ENCODE measurements at regions of chr5 and their contacts with region 1.

Region 1: DNA sequence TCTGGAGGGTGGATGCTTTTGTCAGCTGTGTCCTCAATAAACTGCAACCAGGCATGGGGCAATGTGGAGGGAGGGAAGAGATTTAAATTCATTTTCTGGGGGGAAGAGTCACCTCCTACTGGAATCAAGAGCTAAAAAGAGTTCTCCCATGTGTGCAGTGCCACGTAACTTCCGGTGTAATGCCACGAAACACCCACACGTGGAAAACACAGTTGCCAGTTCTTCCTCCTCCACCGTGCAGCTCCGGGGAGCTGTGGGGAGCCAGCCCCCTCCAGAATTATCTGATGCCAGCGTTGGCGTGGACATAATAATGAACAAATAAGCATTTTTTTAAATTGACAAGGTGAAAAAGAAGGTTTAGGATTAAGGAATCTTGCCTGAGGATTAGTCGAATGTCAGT is 32.1 kb upstream of the MED10 start:
- DNase-seq: no peak
- ATAC-seq: no peak
- H3K4me3 ChIP-seq: no peak overlapping the region
- H3K4me3 Mint-ChIP-seq: no peak overlapping the region
- H3K27ac ChIP-seq: no peak overlapping the region
- H3K27ac Mint-ChIP-seq: no peak overlapping the region
- H3K4me1 ChIP-seq: no peaks in the 10 kb centered on the region
- H3K4me1 Mint-ChIP-seq: no peaks in the 10 kb centered on the region
- H3K27me3 ChIP-seq: no peaks in the 10 kb centered on the region
- H3K27me3 Mint-ChIP-seq: peaks cover 18% of the 10 kb centered on the region
- CTCF ChIP-seq: no peak

Region 2: GRCh38 chr5:5335773-5336211 is 1074.6 kb before region 1 on chr5:
- CTCF ChIA-PET with region 1: no interaction called
- POLR2A ChIA-PET with region 1: no interaction called
- intact Hi-C with region 1: no loop called
- DNase-seq: no peak
- ATAC-seq: no peak
- H3K4me3 ChIP-seq: no peak overlapping the region
- H3K4me3 Mint-ChIP-seq: no peak overlapping the region
- H3K27ac ChIP-seq: no peak overlapping the region
- H3K27ac Mint-ChIP-seq: no peak overlapping the region
- H3K4me1 ChIP-seq: no peaks in the 10 kb centered on the region
- H3K4me1 Mint-ChIP-seq: no peaks in the 10 kb centered on the region
- H3K27me3 ChIP-seq: no peaks in the 10 kb centered on the region
- H3K27me3 Mint-ChIP-seq: no peaks in the 10 kb centered on the region
- CTCF ChIP-seq: no peak

Region 3: DNA sequence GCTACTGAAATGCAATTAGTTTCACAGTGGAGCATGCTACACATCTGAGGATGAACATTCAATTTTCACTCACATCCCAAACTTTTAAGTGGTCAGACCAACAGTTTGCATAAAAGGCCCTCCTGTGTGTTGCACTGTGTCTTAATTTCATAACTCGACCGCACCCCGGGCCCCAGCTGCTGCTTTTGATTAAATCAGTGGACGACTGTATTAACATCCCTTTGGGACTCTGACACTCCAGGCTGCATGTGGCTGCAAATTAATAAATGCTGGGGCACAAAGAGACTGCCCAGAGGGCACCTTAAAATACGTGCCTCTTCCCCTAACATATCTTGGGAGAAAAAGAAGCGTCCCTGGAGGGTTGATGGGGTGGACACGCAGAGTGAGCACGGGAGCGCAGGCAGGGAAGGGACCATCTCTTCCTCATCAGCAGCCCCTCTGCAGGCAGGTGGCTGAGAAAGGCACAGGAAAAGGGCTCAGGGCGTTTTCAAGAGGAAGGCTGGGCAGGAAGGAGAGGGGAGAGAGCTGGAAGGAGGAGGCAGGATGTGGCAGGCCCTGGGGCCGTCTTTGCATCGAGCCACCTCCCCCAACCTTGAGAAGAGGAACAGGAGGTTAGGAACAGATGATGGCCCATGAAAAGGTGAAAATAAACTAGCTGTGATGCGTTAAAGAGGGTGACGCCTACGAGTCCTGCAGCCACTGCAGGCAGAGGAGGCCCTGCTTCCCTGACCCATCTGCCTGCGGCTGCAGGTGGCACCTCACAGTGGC is 50.7 kb before region 1 on chr5:
- CTCF ChIA-PET with region 1: no interaction called
- POLR2A ChIA-PET with region 1: no interaction called
- intact Hi-C with region 1: loop called in 1 of 2 experiments (anchors 5 kb)
- DNase-seq: peak in 3 of 9 experiments; percentile 27 to 62 (median 35)
- ATAC-seq: peak; percentile 77
- H3K4me3 ChIP-seq: peak overlapping the region in 1 of 2 experiments; percentile 3
- H3K4me3 Mint-ChIP-seq: peak overlapping the region; percentile 59
- H3K27ac ChIP-seq: peak overlapping the region; percentile 13 to 46
- H3K27ac Mint-ChIP-seq: peak overlapping the region; percentile 89
- H3K4me1 ChIP-seq: peaks cover 20% of the 10 kb centered on the region
- H3K4me1 Mint-ChIP-seq: peaks cover 17% of the 10 kb centered on the region
- H3K27me3 ChIP-seq: no peaks in the 10 kb centered on the region
- H3K27me3 Mint-ChIP-seq: no peaks in the 10 kb centered on the region
- CTCF ChIP-seq: no peak

Measured in CD8-positive, alpha-beta T cell (primary cell).